ENCODE measurements at regions of chr12 and their contacts with region 1.

Region 1: DNA sequence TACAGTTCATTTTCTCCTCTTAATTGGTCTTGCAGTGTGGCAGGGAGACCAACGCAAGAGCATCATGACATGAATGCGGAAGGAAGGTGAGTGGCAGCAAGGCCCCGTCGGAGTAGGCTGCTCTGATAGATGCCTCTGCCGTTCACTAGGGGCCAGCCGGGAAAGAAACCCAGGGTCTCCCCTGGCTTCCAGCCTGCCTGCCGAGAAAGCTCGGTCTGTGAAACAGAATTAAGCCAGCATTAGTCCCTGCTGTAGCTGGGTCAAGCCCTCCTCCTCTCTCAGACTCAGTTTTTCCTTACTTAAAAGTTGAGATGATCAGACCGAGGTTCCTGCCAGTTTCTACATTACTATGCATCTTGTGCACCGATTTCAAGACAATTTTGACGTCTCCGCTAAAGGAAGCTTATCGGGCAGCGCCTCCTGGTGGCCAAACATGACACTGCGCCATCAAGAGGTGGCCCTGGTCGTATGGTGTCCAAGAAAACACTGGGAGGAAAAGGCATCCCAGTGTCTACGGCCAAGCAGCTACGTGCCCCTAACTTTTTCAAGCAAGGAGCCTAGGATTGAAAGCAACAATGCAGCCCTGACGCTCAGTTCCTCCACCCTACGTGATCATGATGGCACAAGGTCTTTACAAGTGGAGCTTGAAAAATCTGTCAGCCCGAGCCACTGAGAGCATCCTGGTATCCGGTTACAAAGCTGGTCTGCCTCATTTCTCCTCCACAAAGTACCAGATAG is 131.6 kb downstream of the KSR2 start:
- DNase-seq: peak; percentile 39
- ATAC-seq: peak; percentile 86
- H3K4me3 ChIP-seq: no peak overlapping the region
- H3K27ac ChIP-seq: no peak overlapping the region
- H3K4me1 ChIP-seq: peaks cover 3 to 15% of the 10 kb centered on the region in 2 experiments; a peak in 2 of 4 replicates
- H3K27me3 ChIP-seq: no peaks in the 10 kb centered on the region
- CTCF ChIP-seq: peak; percentile 89 to 99 (median 98)
- POLR2A ChIP-seq: no peak
- RAD21 ChIP-seq: peak; percentile 95

Region 2: GRCh38 chr12:117155278-117156060 is 681.7 kb before region 1 on chr12:
- CTCF ChIA-PET with region 1: no interaction called
- POLR2A ChIA-PET with region 1: no interaction called
- RAD21 ChIA-PET with region 1: no interaction called
- intact Hi-C with region 1: loop called (anchors 1 kb)
- DNase-seq: peak; percentile 95
- ATAC-seq: peak; percentile 99
- H3K4me3 ChIP-seq: no peak overlapping the region
- H3K27ac ChIP-seq: no peak overlapping the region
- H3K4me1 ChIP-seq: no peaks in the 10 kb centered on the region
- H3K27me3 ChIP-seq: no peaks in the 10 kb centered on the region
- CTCF ChIP-seq: peak; percentile 93 to 99 (median 98)
- POLR2A ChIP-seq: no peak
- RAD21 ChIP-seq: peak; percentile 56

Region 3: DNA sequence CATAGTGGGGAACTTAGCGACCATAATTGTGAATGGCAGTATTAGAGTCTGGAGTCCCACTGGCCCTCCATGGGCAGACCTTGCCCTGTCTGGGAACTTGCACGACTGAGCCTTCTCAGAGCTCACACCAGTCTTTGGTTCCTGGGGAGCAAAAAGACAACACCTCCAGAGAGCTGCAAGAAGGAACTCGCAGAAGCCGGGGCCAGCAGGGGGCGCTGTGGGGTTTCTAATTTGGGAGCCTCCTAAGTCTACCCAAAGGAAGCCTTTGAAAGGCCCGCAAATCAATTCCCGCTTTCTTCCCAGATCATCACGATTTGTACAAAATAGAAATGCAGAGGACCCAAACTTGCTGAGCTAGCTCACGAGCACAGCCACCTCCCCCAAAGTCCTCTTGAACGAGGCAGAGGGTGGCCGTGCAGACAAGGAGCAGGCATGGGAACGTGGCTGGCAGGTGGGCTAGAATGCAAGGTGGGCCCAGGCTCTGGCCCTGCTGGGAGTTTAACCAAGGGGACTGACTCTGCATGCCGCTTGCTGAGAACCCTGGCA is 600.6 kb before region 1 on chr12:
- CTCF ChIA-PET with region 1: interaction called, 14 read pairs
- POLR2A ChIA-PET with region 1: no interaction called
- RAD21 ChIA-PET with region 1: no interaction called
- intact Hi-C with region 1: loop called (anchors 5 kb)
- DNase-seq: peak; percentile 58
- ATAC-seq: peak; percentile 92
- H3K4me3 ChIP-seq: no peak overlapping the region
- H3K27ac ChIP-seq: no peak overlapping the region
- H3K4me1 ChIP-seq: no peaks in the 10 kb centered on the region
- H3K27me3 ChIP-seq: 0 out of 2 replicates have a peak, but pooled peaks cover 6% of the 10 kb centered on the region
- CTCF ChIP-seq: peak; percentile 70 to 92 (median 85)
- POLR2A ChIP-seq: no peak
- RAD21 ChIP-seq: peak; percentile 77

Region 4: GRCh38 chr12:117367011-117367638 is 470.0 kb before region 1 on chr12:
- CTCF ChIA-PET with region 1: interaction called, 40 read pairs
- POLR2A ChIA-PET with region 1: no interaction called
- RAD21 ChIA-PET with region 1: interaction called, 3 to 7 read pairs
- intact Hi-C with region 1: loop called (anchors 1 kb)
- DNase-seq: peak; percentile 69
- ATAC-seq: peak; percentile 90
- H3K4me3 ChIP-seq: no peak overlapping the region
- H3K27ac ChIP-seq: no peak overlapping the region
- H3K4me1 ChIP-seq: 0 out of 4 replicates have a peak, but pooled peaks cover 0 to 2% of the 10 kb centered on the region in 2 experiments
- H3K27me3 ChIP-seq: peaks cover 62% of the 10 kb centered on the region
- CTCF ChIP-seq: peak; percentile 92 to 96 (median 93)
- POLR2A ChIP-seq: no peak
- RAD21 ChIP-seq: peak; percentile 97

Region 5: DNA sequence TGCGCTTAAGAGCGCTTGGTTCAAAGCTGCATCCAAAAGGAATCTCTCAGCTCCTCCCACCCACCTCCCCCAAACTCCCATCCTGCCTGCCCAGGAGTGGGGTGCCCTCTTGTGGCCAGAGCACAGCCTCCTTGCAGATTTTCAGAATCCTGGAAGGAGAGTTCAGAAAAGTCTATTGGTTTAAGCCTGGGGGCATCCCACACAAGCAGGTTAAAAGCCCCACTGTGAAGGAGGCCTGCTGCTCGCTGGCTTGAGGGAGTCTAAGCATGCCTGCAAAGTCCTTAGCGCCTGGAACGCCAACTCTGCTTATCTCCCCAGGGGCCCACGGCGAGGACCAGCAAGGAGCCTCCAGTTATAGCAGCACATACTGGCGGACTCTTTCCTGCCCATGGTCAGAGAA is 165.4 kb before region 1 on chr12:
- CTCF ChIA-PET with region 1: interaction called, 4 read pairs
- POLR2A ChIA-PET with region 1: no interaction called
- RAD21 ChIA-PET with region 1: no interaction called
- intact Hi-C with region 1: loop called (anchors 5 kb)
- DNase-seq: peak; percentile 29
- ATAC-seq: peak; percentile 90
- H3K4me3 ChIP-seq: no peak overlapping the region
- H3K27ac ChIP-seq: no peak overlapping the region
- H3K4me1 ChIP-seq: peaks cover 0 to 5% of the 10 kb centered on the region in 2 experiments; a peak in 1 of 4 replicates
- H3K27me3 ChIP-seq: 0 out of 2 replicates have a peak, but pooled peaks cover 5% of the 10 kb centered on the region
- CTCF ChIP-seq: peak; percentile 74 to 90 (median 88); a peak in 5 of 6 replicates
- POLR2A ChIP-seq: no peak
- RAD21 ChIP-seq: peak; percentile 84

Region 6: GRCh38 chr12:117968826-117969659 is 131.9 kb after region 1 on chr12 and contains the start of gene KSR2:
- CTCF ChIA-PET with region 1: no interaction called
- POLR2A ChIA-PET with region 1: no interaction called
- RAD21 ChIA-PET with region 1: no interaction called
- intact Hi-C with region 1: no loop called
- DNase-seq: peak; percentile 81
- ATAC-seq: peak; percentile 91
- H3K4me3 ChIP-seq: peak within 1 kb of the TSS; percentile 87 to 89
- H3K27ac ChIP-seq: peak within 1 kb of the TSS; percentile 80
- H3K4me1 ChIP-seq: peaks cover 11 to 28% of the 10 kb centered on the region in 2 experiments
- H3K27me3 ChIP-seq: no peaks in the 10 kb centered on the region
- CTCF ChIP-seq: no peak
- POLR2A ChIP-seq: peak; percentile 49
- RAD21 ChIP-seq: no peak; the same call in 1 of the 2 replicates
- total RNA-seq, gene KSR2: 10.1 TPM

Region 7: DNA sequence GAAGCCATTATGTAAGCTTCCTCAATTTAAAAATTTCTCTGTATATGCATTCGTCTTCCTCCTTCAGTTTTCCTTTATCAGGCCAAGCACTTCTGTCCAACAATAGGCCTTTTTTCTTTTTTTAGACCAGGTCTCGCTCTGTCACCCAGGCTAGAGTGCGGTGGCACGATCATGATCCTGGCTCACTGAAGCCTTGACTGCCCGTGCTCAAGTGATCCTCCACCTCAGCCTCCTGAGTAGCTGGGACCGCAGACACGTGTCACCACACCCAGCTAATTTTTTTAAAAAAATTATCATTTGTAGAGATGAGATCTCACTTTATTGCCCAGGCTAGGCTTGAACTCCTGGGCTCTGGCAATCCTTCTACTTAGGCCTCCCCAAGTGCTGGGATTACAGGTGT is 509.7 kb after region 1 on chr12:
- CTCF ChIA-PET with region 1: no interaction called
- POLR2A ChIA-PET with region 1: no interaction called
- RAD21 ChIA-PET with region 1: no interaction called
- intact Hi-C with region 1: no loop called
- DNase-seq: no peak
- ATAC-seq: no peak
- H3K4me3 ChIP-seq: no peak overlapping the region
- H3K27ac ChIP-seq: no peak overlapping the region
- H3K4me1 ChIP-seq: no peaks in the 10 kb centered on the region
- H3K27me3 ChIP-seq: no peaks in the 10 kb centered on the region
- CTCF ChIP-seq: no peak
- POLR2A ChIP-seq: no peak
- RAD21 ChIP-seq: no peak